Caco-2 (cell line): ENCODE measurements at regions of chr20 and their contacts with region 1.

Region 1: GRCh38 chr20:63272584-63273579 is at the start of gene ARFGAP1:
- DNase-seq: peak; percentile 96 to 98
- H3K4me3 ChIP-seq: peak within 1 kb of the TSS; percentile 97
- H3K4me3 Mint-ChIP-seq: peak within 1 kb of the TSS; percentile 81
- H3K27ac Mint-ChIP-seq: peak within 1 kb of the TSS; percentile 86
- H3K4me1 ChIP-seq: peaks cover 18% of the 10 kb centered on the region
- H3K4me1 Mint-ChIP-seq: peaks cover 23% of the 10 kb centered on the region
- H3K27me3 ChIP-seq: no peaks in the 10 kb centered on the region
- H3K27me3 Mint-ChIP-seq: no peaks in the 10 kb centered on the region
- CTCF ChIP-seq: no peak
- total RNA-seq, gene ARFGAP1: 275 and 286 TPM in 2 replicates

Region 2: GRCh38 chr20:63234739-63235398 is 38.0 kb before region 1 on chr20:
- CTCF ChIA-PET with region 1: interaction called, 11 read pairs
- POLR2A ChIA-PET with region 1: interaction called, 3 read pairs
- intact Hi-C with region 1: no loop called
- DNase-seq: peak; percentile 87 to 89
- H3K4me3 ChIP-seq: no peak overlapping the region
- H3K4me3 Mint-ChIP-seq: peak overlapping the region; percentile 34
- H3K27ac Mint-ChIP-seq: no peak overlapping the region
- H3K4me1 ChIP-seq: peaks cover 53% of the 10 kb centered on the region
- H3K4me1 Mint-ChIP-seq: peaks cover 24% of the 10 kb centered on the region
- H3K27me3 ChIP-seq: no peaks in the 10 kb centered on the region
- H3K27me3 Mint-ChIP-seq: no peaks in the 10 kb centered on the region
- CTCF ChIP-seq: peak; percentile 89 to 96

Region 3: DNA sequence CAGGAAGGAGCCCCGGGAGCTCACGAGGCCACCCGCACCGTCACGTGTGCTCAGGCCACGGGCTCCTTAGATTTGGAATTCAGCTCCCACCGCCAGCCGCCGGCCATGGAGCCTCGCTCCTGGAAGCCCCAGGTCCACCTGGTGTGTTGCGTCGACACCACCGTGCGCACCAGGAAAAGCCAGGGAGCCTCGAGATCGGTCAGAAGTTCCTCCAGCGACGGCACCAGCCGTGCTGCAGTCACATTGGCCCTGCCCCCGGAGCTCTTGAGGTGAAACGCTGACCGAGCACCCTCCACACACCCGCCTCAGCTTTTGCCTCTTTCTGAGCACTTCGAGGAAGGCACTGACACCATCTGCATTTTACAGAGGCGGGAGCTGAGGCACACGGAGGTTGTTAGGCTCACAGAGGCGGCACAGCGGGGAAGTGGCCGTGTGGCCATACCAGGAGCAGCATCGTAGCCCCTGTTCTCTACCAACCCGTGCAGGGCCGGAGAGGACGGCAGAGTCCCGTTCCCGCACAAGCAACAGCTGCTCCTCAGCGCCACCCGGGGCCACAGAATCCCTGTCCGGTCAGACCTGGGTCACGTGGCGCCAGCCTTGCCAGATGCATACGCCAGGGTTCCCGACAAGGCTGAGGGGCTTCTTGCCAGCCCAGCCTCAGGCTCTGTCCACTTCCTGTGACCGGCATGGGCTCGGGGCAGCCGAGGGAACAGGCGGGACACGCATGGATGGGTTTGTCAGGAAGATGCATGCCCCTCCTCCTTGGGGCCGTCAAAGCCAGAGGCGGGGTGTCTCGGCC is 26.2 kb before region 1 on chr20:
- CTCF ChIA-PET with region 1: interaction called, 7 read pairs
- POLR2A ChIA-PET with region 1: interaction called, 3 read pairs
- intact Hi-C with region 1: loop called (anchors 2 kb)
- DNase-seq: no peak
- H3K4me3 ChIP-seq: no peak overlapping the region
- H3K4me3 Mint-ChIP-seq: no peak overlapping the region
- H3K27ac Mint-ChIP-seq: no peak overlapping the region
- H3K4me1 ChIP-seq: peaks cover 42% of the 10 kb centered on the region
- H3K4me1 Mint-ChIP-seq: peaks cover 24% of the 10 kb centered on the region
- H3K27me3 ChIP-seq: no peaks in the 10 kb centered on the region
- H3K27me3 Mint-ChIP-seq: no peaks in the 10 kb centered on the region
- CTCF ChIP-seq: no peak

Region 4: GRCh38 chr20:63261060-63261794 is 11.7 kb before region 1 on chr20:
- CTCF ChIA-PET with region 1: no interaction called
- POLR2A ChIA-PET with region 1: interaction called, 4 read pairs
- intact Hi-C with region 1: loop called (anchors 1 kb)
- DNase-seq: peak; percentile 74 to 78
- H3K4me3 ChIP-seq: no peak overlapping the region
- H3K4me3 Mint-ChIP-seq: peak overlapping the region; percentile 4
- H3K27ac Mint-ChIP-seq: peak overlapping the region; percentile 54
- H3K4me1 ChIP-seq: peaks cover 59% of the 10 kb centered on the region
- H3K4me1 Mint-ChIP-seq: peaks cover 43% of the 10 kb centered on the region
- H3K27me3 ChIP-seq: no peaks in the 10 kb centered on the region
- H3K27me3 Mint-ChIP-seq: no peaks in the 10 kb centered on the region
- CTCF ChIP-seq: no peak